ENCODE measurements at regions of chr11 and their contacts with region 1.

Region 1: DNA sequence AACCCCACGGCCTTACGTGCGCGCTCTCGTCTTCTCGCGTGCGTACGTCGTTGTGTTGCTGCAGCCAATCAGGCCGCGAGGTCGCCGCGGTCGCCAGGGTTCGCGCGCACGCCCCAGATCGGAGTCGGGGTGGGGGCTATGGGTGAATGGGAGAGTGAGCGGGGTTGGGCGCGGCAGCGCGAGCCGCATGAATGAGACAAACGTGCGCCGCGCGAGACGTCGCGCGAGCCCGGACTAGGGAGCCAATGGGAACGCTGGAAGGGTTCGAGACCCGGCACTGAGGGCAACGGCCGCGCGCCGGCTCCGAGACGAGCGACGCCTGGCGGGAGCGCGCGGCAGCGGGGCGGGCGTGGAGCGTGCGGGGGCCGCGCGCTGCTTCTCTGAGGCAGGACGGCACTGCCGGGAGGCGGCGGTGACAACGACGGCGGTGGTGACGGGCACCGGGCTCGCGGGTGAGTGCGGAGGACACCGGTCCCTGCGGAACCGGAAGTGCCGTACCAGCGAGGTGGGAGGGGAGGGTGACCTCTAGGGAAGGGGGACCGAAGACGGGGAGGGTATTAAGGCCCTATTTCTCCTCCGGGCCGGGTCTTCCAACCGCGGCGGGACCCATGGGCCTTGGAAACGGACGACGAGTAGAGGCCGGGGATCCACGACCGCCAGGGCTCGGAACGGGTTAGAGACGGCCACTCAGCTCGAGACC is at the start of gene ZDHHC5:
- DNase-seq: peak; percentile 97
- ATAC-seq: peak; percentile 92
- H3K4me3 ChIP-seq: peak within 1 kb of the TSS; percentile 81 to 91 (median 88)
- H3K27ac ChIP-seq: peak within 1 kb of the TSS; percentile 98
- H3K4me1 ChIP-seq: peaks cover 35% of the 10 kb centered on the region
- H3K27me3 ChIP-seq: no peaks in the 10 kb centered on the region; a peak in 1 of 5 replicates
- CTCF ChIP-seq: peak; percentile 57; the same call in 1 of the 2 replicates
- EP300 ChIP-seq: no peak; a peak in 1 of 4 replicates
- POLR2A ChIP-seq: peak; percentile 59 to 88
- RAD21 ChIP-seq: peak; percentile 49; the same call in 1 of the 2 replicates
- total RNA-seq, gene ZDHHC5: 20.3 and 26.6 TPM in 2 replicates

Region 2: GRCh38 chr11:57444362-57445121 is 223.3 kb before region 1 on chr11:
- CTCF ChIA-PET with region 1: no interaction called
- POLR2A ChIA-PET with region 1: no interaction called
- in situ Hi-C with region 1: no loop called
- intact Hi-C with region 1: loop called (anchors 5 kb)
- DNase-seq: no peak
- ATAC-seq: no peak
- H3K4me3 ChIP-seq: no peak overlapping the region
- H3K27ac ChIP-seq: no peak overlapping the region
- H3K4me1 ChIP-seq: peaks cover 55% of the 10 kb centered on the region
- H3K27me3 ChIP-seq: no peaks in the 10 kb centered on the region
- CTCF ChIP-seq: no peak
- EP300 ChIP-seq: no peak
- POLR2A ChIP-seq: no peak
- RAD21 ChIP-seq: no peak

Region 3: GRCh38 chr11:57523419-57523818 is 144.5 kb before region 1 on chr11:
- CTCF ChIA-PET with region 1: no interaction called
- POLR2A ChIA-PET with region 1: no interaction called
- in situ Hi-C with region 1: no loop called
- intact Hi-C with region 1: no loop called
- DNase-seq: no peak
- ATAC-seq: no peak
- H3K4me3 ChIP-seq: no peak overlapping the region
- H3K27ac ChIP-seq: no peak overlapping the region
- H3K4me1 ChIP-seq: peaks cover 30% of the 10 kb centered on the region
- H3K27me3 ChIP-seq: no peaks in the 10 kb centered on the region
- CTCF ChIP-seq: no peak
- EP300 ChIP-seq: no peak
- POLR2A ChIP-seq: no peak
- RAD21 ChIP-seq: no peak

Region 4: DNA sequence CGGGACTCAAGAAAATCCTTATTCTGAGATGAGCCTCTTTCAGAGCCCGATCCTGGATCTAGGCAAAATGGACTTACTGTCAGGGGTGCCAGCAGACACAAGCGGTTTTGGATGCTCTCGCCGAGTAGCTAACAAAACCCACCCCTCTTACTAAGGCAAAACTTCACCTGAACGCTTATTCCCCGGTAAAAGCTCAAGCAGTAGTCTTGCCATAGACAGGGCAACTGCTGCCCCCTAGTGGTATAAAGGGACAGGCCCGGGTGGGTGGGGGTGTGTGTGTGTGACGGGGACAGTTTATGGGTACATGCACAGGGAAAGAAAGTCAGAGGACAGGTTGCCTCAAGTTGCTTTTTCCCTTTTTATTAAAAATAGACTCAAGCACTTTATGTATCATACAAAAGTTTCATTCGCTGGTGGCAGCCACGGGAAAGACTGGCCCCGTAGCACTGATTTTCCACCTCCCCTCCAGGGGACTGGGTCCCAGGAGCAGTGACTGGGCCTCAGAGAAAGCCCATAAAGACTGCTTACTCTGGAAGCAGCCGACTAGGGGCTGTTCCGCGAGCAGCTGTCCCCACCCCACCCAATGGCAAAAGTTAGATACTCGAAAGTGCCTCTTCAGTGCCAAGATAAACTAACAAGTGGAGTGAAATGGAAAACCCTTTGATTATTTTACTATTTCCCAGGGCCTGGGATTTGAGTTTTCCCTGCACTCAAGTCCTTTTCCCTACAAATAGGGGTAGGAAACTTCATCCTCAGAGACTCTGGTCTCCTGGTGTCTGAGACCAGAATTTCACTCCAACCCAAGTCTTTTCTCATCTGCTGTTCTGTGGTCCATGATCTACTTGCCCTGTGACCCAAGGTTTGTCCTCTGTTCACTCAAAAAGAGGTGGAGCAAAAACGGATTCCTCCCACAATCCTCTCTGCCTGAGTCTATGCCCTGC is 22.9 kb before region 1 on chr11:
- CTCF ChIA-PET with region 1: no interaction called
- POLR2A ChIA-PET with region 1: no interaction called
- in situ Hi-C with region 1: no loop called
- intact Hi-C with region 1: no loop called
- DNase-seq: peak; percentile 69
- ATAC-seq: peak; percentile 81
- H3K4me3 ChIP-seq: no peak overlapping the region
- H3K27ac ChIP-seq: no peak overlapping the region
- H3K4me1 ChIP-seq: peaks cover 37% of the 10 kb centered on the region
- H3K27me3 ChIP-seq: peaks cover 6 to 42% of the 10 kb centered on the region in 2 experiments
- CTCF ChIP-seq: peak; percentile 86
- EP300 ChIP-seq: no peak
- POLR2A ChIP-seq: no peak
- RAD21 ChIP-seq: peak; percentile 52

Region 5: DNA sequence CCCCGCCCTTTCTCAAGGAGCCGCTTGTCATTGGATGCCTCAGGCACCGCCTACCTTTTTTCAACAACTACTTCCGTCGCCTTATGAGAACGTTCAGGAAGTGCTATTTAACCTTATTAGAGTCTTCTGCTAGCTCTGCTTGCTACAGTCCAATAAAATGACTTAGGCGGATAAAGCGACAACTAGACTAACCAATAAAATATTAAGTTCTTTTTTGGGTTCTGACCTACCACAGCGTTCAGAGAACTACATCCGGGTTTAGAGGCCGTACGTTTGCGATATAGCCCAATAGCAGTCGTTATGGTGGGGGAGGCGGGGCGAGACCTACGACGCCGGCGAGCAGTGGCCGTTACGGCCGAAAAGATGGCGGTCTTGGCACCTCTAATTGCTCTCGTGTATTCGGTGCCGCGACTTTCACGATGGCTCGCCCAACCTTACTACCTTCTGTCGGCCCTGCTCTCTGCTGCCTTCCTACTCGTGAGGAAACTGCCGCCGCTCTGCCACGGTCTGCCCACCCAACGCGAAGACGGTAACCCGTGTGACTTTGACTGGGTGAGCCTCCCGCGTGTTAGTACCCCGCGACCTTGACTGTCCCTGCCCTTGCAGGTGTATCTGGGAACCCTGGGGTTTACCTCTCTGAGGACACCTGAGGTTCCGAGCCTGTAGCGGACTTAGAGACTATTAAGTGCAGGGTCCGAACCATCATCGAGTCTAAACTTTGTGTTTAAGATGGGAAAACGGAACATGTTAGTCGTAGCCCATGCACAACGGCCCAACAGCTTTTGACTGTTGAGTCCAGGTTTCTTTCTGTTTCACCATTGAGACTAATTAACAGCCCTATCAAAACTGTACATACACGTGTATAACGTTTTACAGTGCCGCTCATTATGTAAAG is 44.6 kb after region 1 on chr11 and contains the start of gene TMX2:
- CTCF ChIA-PET with region 1: no interaction called
- POLR2A ChIA-PET with region 1: interaction called, 5 read pairs
- in situ Hi-C with region 1: no loop called
- intact Hi-C with region 1: loop called (anchors 1 kb)
- DNase-seq: peak; percentile 100
- ATAC-seq: peak; percentile 95
- H3K4me3 ChIP-seq: peak within 1 kb of the TSS; percentile 92 to 98 (median 92)
- H3K27ac ChIP-seq: peak within 1 kb of the TSS; percentile 82
- H3K4me1 ChIP-seq: peaks cover 29% of the 10 kb centered on the region
- H3K27me3 ChIP-seq: no peaks in the 10 kb centered on the region; a peak in 1 of 5 replicates
- CTCF ChIP-seq: no peak
- EP300 ChIP-seq: no peak
- POLR2A ChIP-seq: peak; percentile 69 to 85
- RAD21 ChIP-seq: no peak
- total RNA-seq, gene TMX2: 67.0 and 129 TPM in 2 replicates

Region 6: DNA sequence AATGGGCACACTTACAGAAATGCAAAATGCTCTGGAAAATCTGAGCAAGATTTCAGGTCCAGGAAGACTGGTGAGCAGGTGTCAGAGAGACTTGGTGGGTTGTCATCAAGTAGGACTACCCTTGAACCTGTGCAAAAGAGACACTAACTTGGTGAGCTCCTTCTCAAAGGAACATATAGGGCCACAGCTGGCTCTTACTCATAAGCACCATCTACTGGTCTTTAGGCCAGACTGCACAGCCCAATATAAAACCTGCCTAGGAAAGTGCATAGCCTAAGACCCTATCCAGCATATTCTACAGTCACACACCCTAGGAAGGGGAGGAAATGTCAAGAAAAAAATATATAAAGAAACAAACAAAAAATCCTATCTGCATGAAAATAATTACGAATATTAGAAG is 618.4 kb after region 1 on chr11:
- CTCF ChIA-PET with region 1: no interaction called
- POLR2A ChIA-PET with region 1: no interaction called
- in situ Hi-C with region 1: loop called (anchors 25 kb)
- intact Hi-C with region 1: no loop called
- DNase-seq: peak; percentile 54
- ATAC-seq: peak; percentile 98
- H3K4me3 ChIP-seq: no peak overlapping the region
- H3K27ac ChIP-seq: no peak overlapping the region
- H3K4me1 ChIP-seq: 0 out of 2 replicates have a peak, but pooled peaks cover 9% of the 10 kb centered on the region
- H3K27me3 ChIP-seq: no peaks in the 10 kb centered on the region
- CTCF ChIP-seq: peak; percentile 85
- EP300 ChIP-seq: no peak
- POLR2A ChIP-seq: no peak
- RAD21 ChIP-seq: peak; percentile 54

Region 7: DNA sequence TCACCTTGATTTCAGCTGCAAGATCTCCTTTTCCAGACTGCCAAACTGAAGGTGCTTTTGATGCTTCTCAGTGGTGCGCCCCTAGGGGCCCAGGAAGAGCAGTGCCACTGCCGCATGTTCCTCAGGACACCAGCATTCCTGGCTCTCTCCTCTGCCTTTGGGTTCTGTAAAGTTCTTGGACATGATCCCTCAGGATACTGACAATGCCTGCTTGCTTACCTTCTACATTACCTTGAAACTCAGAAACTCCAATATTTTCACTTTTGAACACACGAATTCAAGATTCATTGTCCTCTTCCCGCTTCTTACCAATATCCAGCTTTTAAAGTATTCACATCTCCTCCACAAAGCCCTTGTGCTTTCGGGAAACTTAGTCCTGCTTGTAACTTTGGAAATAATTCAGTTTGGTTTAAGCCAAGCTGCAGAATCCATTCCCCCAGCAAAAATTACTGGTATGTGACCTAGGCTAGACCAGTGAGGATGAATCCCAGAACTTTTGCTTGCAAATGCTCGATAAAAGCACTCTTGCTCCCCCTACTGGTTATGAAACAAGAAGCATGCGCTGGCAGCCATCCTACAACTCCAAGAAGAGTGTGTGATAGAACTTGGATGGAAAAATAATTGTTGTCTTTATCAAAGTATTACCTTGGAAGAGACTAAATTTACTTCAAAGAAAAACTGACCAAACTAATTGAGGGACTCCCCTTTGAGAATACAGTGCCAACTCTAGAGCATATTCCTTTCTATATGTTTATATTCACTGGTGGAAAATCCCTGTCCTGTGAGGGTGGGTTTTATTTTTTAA is 856.5 kb after region 1 on chr11:
- CTCF ChIA-PET with region 1: no interaction called
- POLR2A ChIA-PET with region 1: no interaction called
- in situ Hi-C with region 1: loop called (anchors 25 kb)
- intact Hi-C with region 1: no loop called
- DNase-seq: peak; percentile 68
- ATAC-seq: peak; percentile 99
- H3K4me3 ChIP-seq: no peak overlapping the region; a peak in 1 of 6 replicates
- H3K27ac ChIP-seq: no peak overlapping the region
- H3K4me1 ChIP-seq: peaks cover 6% of the 10 kb centered on the region
- H3K27me3 ChIP-seq: 0 out of 5 replicates have a peak, but pooled peaks cover 0 to 4% of the 10 kb centered on the region in 2 experiments
- CTCF ChIP-seq: peak; percentile 70
- EP300 ChIP-seq: no peak
- POLR2A ChIP-seq: no peak
- RAD21 ChIP-seq: no peak

Measured in HepG2 (cell line).